Sigmoid colon (tissue), 7 donors: ENCODE measurements at regions of chr15 and their contacts with region 1.

Region 1: GRCh38 chr15:41827880-41828806 is at the start of gene JMJD7:
- DNase-seq: peak; percentile 97
- H3K4me3 ChIP-seq: peak within 1 kb of the TSS; percentile 54 to 84 (median 70)
- H3K27ac ChIP-seq: peak within 1 kb of the TSS; percentile 79 to 90 (median 87)
- H3K4me1 ChIP-seq: peaks cover 0 to 21% (median 18%) of the 10 kb centered on the region in 4 donors
- H3K27me3 ChIP-seq: no peaks in the 10 kb centered on the region
- CTCF ChIP-seq: no peak
- EP300 ChIP-seq: no peak
- POLR2A ChIP-seq: peak; percentile 48 to 61
- total RNA-seq, gene JMJD7: 9.7 to 14.0 (median 12.1) TPM

Region 2: DNA sequence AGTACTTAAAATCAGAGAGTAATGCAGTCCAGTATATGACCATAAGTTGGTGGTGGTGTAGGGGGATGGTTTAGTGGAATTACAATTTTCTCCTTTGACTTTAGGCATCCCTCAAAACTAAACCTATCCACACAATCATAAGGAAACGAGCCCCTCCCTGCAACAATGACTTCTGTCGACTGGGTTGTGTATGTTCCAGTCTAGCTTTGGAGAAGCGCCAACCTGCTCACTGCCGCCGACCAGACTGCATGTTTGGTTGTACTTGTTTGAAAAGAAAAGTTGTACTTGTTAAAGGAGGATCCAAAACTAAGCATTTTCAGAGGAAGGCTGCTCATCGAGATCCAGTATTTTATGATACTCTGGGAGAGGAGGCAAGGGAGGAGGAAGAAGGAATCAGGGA is 115.1 kb before region 1 on chr15:
- intact Hi-C with region 1: no loop called
- DNase-seq: peak; percentile 79
- H3K4me3 ChIP-seq: no peak overlapping the region
- H3K27ac ChIP-seq: peak overlapping the region in 3 of 4 donors; percentile 45 to 58 (median 52)
- H3K4me1 ChIP-seq: peaks cover 0 to 23% (median 18%) of the 10 kb centered on the region in 4 donors
- H3K27me3 ChIP-seq: no peaks in the 10 kb centered on the region
- CTCF ChIP-seq: no peak
- EP300 ChIP-seq: no peak
- POLR2A ChIP-seq: no peak

Region 3: DNA sequence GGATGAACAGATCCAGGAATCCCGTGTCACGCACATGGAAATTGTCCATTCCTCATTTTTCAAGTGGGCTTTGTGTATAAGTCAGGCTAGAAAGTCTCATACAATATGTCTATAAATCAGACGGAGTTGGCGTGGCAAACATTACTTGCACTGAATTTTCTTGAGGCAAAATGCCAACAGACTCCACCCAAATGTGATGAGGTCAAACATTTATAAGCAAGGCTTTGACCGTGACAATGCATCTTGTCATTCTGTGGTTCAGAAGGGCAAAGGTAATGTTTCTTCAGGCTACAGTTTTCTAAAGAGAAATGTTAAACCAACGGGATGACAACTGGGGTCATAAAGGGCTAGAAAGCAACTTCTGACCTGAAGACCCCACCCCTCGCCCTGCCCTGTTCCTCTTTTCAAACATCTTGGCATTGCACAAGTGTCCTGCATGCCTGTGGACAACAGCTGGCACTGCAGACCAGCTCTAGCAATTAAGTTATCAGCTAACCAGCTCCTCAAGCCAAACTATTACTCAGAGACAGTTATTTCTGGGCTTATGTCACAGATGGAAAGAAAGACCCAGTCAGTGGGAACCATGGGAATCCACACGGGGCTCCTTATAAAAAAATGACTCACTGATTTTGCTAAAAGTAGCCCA is 102.2 kb after region 1 on chr15:
- intact Hi-C with region 1: no loop called
- DNase-seq: no peak
- H3K4me3 ChIP-seq: no peak overlapping the region
- H3K27ac ChIP-seq: peak overlapping the region; percentile 54 to 64 (median 57)
- H3K4me1 ChIP-seq: peaks cover 0 to 46% (median 35%) of the 10 kb centered on the region in 4 donors
- H3K27me3 ChIP-seq: no peaks in the 10 kb centered on the region
- CTCF ChIP-seq: no peak
- EP300 ChIP-seq: no peak
- POLR2A ChIP-seq: no peak

Region 4: DNA sequence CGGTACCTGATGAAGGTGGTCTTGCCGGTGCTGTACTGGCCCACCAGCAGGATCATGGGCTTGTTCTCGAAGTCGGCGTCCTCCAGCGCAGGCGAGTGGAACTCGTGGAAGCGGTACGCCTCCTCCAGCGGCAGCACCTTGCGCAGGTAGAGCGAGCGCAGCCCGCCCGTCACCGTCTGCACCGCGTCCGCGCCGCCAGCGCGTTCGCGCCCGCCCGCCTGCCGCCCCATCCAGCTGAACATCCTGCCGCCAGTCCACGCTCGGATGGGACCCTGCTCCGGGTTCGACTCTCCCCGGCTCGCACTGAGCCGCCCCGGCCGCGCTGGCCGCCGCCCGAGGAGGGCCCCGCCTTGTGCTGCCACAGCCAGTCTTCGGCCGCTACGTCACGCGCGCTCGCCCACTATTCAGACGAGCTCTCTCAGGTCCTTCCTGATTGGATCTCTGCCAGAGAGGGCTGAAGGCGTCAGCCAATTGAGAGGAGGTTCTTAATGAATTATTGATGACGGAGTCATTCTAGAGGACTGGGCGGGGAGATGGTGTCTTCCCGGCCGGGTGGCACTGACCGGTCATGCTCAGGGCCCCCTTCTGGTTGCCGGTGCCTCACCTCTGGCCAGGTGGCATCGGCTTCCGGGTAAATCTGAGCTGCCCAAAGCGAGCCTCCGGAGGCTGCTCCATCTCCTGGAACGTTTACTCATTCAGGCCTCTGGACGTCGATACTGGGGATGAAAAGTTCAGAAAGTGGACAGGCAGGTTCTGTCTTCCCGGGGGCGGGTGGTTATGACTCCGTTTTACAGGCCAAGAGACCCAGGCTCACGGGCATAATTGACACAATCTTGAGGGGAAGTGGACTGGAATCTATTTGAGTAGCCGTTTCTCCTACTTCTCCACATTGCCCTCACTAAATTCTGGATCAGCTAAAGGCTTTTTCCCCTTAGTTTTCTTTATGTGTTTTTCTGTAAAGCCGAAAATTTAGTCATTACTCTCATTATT is 144.4 kb after region 1 on chr15 and contains the start of gene EHD4:
- intact Hi-C with region 1: loop called (anchors 2 kb)
- DNase-seq: peak; percentile 99
- H3K4me3 ChIP-seq: peak within 1 kb of the TSS; percentile 72 to 91 (median 79)
- H3K27ac ChIP-seq: peak within 1 kb of the TSS; percentile 77 to 89 (median 82)
- H3K4me1 ChIP-seq: peaks cover 0 to 11% (median 5%) of the 10 kb centered on the region in 4 donors
- H3K27me3 ChIP-seq: no peaks in the 10 kb centered on the region
- CTCF ChIP-seq: peak in 1 of 4 experiments; percentile 21
- EP300 ChIP-seq: no peak
- POLR2A ChIP-seq: peak; percentile 27 to 48
- total RNA-seq, gene EHD4: 8.9 to 13.0 (median 11.3) TPM

Region 5: DNA sequence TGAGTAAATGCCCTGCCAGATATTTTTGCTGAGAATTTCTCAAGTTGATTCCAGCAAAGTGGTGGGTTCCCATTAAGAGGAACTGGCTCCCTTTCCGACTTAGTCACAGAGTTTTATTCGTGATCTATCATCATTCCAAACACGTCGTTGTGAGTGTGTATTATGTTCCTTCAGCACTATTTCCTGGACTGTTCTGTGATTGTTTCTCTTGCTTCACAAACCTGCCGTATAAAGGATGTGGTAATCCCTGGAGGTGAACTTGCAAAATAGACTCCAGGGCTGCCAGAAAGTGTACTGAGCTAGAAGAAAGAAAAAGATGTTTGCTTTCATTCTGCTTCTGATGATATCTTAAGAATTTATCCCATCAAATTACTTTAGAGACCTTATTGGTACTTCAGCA is 516.6 kb after region 1 on chr15:
- intact Hi-C with region 1: no loop called
- DNase-seq: no peak
- H3K4me3 ChIP-seq: no peak overlapping the region
- H3K27ac ChIP-seq: peak overlapping the region in 1 of 4 donors; percentile 53
- H3K4me1 ChIP-seq: no peaks in the 10 kb centered on the region
- H3K27me3 ChIP-seq: no peaks in the 10 kb centered on the region
- CTCF ChIP-seq: no peak
- EP300 ChIP-seq: no peak
- POLR2A ChIP-seq: no peak